Panc1 (cell line): ENCODE measurements at regions of chr6 and their contacts with region 1.

Region 1: DNA sequence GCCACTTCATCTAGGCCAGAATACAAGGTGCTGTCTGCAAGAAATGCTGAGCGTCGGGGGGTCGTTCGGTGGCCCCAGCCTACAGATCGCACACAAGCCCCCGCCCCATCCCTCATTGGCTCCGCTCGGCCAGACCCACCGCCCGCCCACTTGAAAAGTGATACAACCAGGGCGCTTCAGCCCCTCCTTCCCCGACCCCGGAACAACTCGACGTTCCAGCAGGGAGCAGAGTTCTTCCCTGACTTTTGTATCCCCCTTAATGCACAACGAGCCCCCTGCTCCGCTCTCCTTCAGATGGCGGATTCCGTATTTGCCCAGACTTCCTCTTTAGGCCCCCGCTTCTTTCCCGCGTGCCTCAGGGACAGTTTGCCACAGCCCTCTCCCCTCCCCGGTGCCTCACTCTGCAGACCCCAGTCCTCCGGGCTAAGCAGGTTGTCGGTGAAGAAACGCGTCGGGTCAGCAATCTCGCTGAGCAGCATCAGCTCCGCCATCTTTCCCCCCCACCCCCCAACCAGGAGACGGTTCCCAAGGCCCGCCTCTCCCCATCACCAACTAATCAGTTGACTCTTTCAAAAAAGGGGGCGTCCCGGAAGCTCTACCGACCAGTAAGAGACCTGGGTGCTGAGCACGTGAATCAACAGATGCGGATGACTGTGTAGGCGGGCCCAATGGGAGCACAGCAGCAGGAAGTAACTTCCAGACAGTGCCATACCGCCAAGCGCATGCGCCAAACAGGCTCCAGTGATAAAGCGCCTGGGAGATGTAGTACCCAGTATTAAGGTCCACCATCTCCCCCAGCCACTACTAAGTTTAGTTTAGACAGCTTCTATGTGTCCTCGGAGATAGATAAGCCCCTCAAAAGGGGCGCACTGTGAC is at the start of gene ATF6B:
- DNase-seq: peak; percentile 93
- ATAC-seq: peak; percentile 95
- H3K4me3 ChIP-seq: peak within 1 kb of the TSS; percentile 92 to 100
- H3K27ac ChIP-seq: peak within 1 kb of the TSS; percentile 96
- H3K4me1 ChIP-seq: peaks cover 23% of the 10 kb centered on the region
- H3K27me3 ChIP-seq: no peaks in the 10 kb centered on the region
- CTCF ChIP-seq: no peak
- total RNA-seq, gene ATF6B: 127 TPM

Region 2: GRCh38 chr6:32058511-32058963 is 69.4 kb before region 1 on chr6:
- CTCF ChIA-PET with region 1: no interaction called
- POLR2A ChIA-PET with region 1: no interaction called
- in situ Hi-C with region 1: no loop called
- intact Hi-C with region 1: no loop called
- DNase-seq: no peak
- ATAC-seq: no peak
- H3K4me3 ChIP-seq: no peak overlapping the region
- H3K27ac ChIP-seq: no peak overlapping the region
- H3K4me1 ChIP-seq: no peaks in the 10 kb centered on the region
- H3K27me3 ChIP-seq: no peaks in the 10 kb centered on the region
- CTCF ChIP-seq: no peak

Region 3: GRCh38 chr6:32084780-32085179 is 43.2 kb before region 1 on chr6:
- CTCF ChIA-PET with region 1: interaction called, 11 read pairs
- POLR2A ChIA-PET with region 1: interaction called, 8 read pairs
- in situ Hi-C with region 1: no loop called
- intact Hi-C with region 1: no loop called
- DNase-seq: no peak
- ATAC-seq: no peak
- H3K4me3 ChIP-seq: no peak overlapping the region
- H3K27ac ChIP-seq: no peak overlapping the region
- H3K4me1 ChIP-seq: no peaks in the 10 kb centered on the region
- H3K27me3 ChIP-seq: no peaks in the 10 kb centered on the region
- CTCF ChIP-seq: no peak